ENCODE measurements at regions of chr9 and their contacts with region 1.

Region 1: DNA sequence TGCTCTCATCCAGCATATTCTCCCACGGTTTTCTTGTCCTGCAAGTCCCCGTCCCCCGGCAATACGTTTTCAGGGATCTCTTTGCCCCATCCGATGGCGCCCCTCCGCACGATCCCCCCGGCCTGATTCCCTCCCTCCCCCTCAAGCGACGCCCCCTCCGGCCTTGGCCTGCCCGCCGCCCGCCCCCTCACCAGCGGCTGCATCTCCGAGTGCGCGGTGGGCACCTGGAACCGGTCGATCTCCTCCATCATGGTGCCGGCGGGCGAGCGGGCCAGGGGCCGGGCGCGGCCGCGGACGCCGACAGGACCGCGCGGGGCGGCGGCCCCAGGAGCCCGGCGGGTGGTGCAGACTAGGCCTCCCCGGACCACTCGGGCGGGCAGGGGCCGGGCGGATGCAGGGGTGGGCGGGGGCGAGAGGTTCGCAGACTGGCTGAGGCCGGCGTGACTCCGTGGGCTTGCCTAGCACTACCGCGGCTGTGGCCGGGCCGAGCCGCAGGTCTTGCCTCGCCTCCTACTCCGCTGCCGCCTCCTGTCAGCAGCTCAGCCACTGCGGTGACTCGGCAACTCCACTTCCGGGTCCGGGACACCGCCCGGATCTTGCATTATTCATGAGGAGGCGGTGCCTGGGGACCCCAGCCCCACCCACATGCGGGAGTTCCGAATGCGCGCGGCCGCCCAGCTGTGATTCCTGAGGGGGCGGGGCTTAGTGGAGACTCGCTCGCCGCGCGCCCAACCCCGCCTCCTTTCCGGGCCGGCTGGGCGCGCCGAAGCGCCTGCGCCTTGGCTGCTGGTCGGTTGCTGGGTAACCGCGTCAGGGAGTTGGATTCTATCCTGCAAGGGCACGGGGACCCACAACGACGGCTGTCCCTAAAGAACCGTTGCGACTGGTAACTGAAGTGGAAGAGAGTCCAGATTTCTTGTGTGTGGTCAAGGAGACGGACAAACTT is at the starts of genes DNAI1 and FAM219A:
- DNase-seq: peak; percentile 99
- H3K4me3 Mint-ChIP-seq: peak within 1 kb of the TSS; percentile 87
- H3K27ac Mint-ChIP-seq: no peak within 1 kb of the TSS
- H3K4me1 Mint-ChIP-seq: peaks cover 43% of the 10 kb centered on the region
- H3K27me3 Mint-ChIP-seq: peaks cover 1% of the 10 kb centered on the region
- total RNA-seq, gene DNAI1: 0.26 TPM in 1 of 2 experiments, not detected in the other
- total RNA-seq, gene FAM219A: 11.1 to 11.6 TPM

Region 2: DNA sequence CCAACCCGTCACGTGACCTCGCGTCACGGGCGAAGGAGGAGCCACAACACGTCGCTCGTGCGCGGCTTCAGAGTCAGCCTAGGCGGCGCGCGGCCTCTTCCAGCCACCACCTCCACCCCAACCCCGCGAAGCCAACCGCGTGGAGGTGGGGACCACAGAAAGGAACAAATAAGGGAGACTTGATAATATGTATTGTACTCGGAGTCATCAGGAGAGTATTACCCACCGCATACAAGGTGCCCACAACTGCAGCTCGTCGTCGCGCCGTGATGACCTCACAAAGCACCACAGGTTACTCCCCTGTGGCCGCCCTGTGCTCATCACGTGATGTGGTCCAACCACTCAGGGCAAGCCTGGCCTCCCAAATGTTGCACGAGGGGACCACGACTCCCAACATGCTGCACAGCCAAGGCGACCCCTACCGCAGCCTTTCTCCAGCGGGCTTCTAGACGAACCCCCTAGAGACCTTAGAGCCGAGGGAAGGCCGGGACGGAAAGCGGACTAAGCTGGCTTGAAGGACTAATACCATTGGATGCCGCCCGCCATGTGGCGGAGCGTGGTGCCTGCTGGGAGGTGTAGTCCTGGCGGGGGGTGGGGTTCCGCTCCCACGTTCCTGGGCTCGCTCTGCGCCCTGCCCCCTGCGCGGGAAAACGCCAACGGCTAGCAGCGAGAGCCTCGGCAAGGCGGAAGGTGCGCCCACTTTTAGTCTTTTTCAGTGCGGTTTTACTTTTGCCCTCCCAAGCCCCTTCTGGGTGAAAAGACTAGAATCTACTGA is 409.2 kb before region 1 on chr9:
- CTCF ChIA-PET with region 1: no interaction called
- intact Hi-C with region 1: loop called (anchors 2 kb)
- DNase-seq: peak; percentile 98
- H3K4me3 Mint-ChIP-seq: peak overlapping the region; percentile 91
- H3K27ac Mint-ChIP-seq: peak overlapping the region; percentile 98
- H3K4me1 Mint-ChIP-seq: peaks cover 33% of the 10 kb centered on the region
- H3K27me3 Mint-ChIP-seq: no peaks in the 10 kb centered on the region

Region 3: DNA sequence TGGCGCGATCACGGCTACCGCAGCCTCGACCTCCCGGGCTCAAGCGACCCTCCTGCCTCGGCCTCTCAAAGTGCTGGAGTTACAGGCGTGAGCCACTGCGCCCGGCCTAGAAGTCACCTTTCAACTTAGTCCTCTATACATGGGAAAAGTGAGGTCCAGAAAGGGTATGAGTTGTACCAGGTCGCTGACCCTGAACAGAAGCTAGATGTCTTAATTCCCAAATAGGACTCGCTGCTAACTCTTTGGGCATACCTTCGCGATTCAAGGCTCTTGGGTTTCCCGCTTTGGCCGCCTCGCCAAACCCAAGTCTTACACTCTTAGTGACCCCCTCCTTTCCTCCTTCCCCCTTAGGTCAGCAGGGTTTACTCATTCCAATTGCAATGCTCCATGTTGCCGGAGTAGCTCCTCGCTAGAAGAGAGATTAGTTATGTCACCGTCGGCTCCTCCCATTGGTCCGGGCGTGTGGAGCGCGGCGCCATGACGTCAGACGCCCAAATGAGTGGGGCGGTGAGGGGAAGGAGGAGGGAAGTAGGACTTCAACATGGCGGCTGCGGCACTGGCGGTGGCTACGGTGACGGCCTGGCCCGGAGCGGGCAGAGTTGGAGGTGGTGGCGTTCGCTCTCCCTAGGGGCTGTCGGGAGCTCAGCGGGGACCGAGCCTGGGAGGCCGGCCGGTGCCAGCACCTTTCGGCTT is 279.6 kb before region 1 on chr9 and contains the start of gene UBAP1:
- CTCF ChIA-PET with region 1: no interaction called
- intact Hi-C with region 1: loop called (anchors 10 kb)
- DNase-seq: peak; percentile 99
- H3K4me3 Mint-ChIP-seq: peak within 1 kb of the TSS; percentile 84
- H3K27ac Mint-ChIP-seq: peak within 1 kb of the TSS; percentile 94
- H3K4me1 Mint-ChIP-seq: peaks cover 16% of the 10 kb centered on the region
- H3K27me3 Mint-ChIP-seq: no peaks in the 10 kb centered on the region
- total RNA-seq, gene UBAP1: 29.9 to 31.7 TPM

Region 4: GRCh38 chr9:34328987-34329832 is 129.1 kb before region 1 on chr9 and contains the starts of genes KIF24 and NUDT2:
- CTCF ChIA-PET with region 1: no interaction called
- intact Hi-C with region 1: loop called (anchors 1 kb)
- DNase-seq: peak; percentile 98
- H3K4me3 Mint-ChIP-seq: peak within 1 kb of the TSS; percentile 88
- H3K27ac Mint-ChIP-seq: peak within 1 kb of the TSS; percentile 94
- H3K4me1 Mint-ChIP-seq: peaks cover 42% of the 10 kb centered on the region
- H3K27me3 Mint-ChIP-seq: no peaks in the 10 kb centered on the region
- total RNA-seq, gene KIF24: 4.2 to 4.5 TPM
- total RNA-seq, gene NUDT2: 39.2 to 42.9 TPM

Region 5: GRCh38 chr9:34500623-34501267 is 42.5 kb after region 1 on chr9:
- CTCF ChIA-PET with region 1: interaction called, 4 read pairs
- intact Hi-C with region 1: loop called (anchors 1 kb)
- DNase-seq: peak; percentile 91
- H3K4me3 Mint-ChIP-seq: no peak overlapping the region
- H3K27ac Mint-ChIP-seq: no peak overlapping the region
- H3K4me1 Mint-ChIP-seq: peaks cover 13% of the 10 kb centered on the region
- H3K27me3 Mint-ChIP-seq: peaks cover 7% of the 10 kb centered on the region

Region 6: GRCh38 chr9:34611829-34612630 is 153.7 kb after region 1 on chr9 and contains the start of gene RPP25L:
- CTCF ChIA-PET with region 1: interaction called, 3 read pairs
- intact Hi-C with region 1: loop called (anchors 1 kb)
- DNase-seq: peak; percentile 80
- H3K4me3 Mint-ChIP-seq: peak within 1 kb of the TSS; percentile 87
- H3K27ac Mint-ChIP-seq: peak within 1 kb of the TSS; percentile 83
- H3K4me1 Mint-ChIP-seq: peaks cover 21% of the 10 kb centered on the region
- H3K27me3 Mint-ChIP-seq: no peaks in the 10 kb centered on the region
- total RNA-seq, gene RPP25L: 25.7 to 27.0 TPM

Region 7: GRCh38 chr9:35071814-35072460 is 613.7 kb after region 1 on chr9:
- CTCF ChIA-PET with region 1: no interaction called
- intact Hi-C with region 1: loop called (anchors 1 kb)
- DNase-seq: peak; percentile 77
- H3K4me3 Mint-ChIP-seq: peak overlapping the region; percentile 92
- H3K27ac Mint-ChIP-seq: peak overlapping the region; percentile 96
- H3K4me1 Mint-ChIP-seq: peaks cover 57% of the 10 kb centered on the region
- H3K27me3 Mint-ChIP-seq: no peaks in the 10 kb centered on the region